Mammary epithelial cell (primary cell): ENCODE measurements at regions of chr6 and their contacts with region 1.

Region 1: GRCh38 chr6:53530346-53530745 is 14.6 kb downstream of the GCLC start:
- DNase-seq: peak; percentile 30
- H3K4me3 ChIP-seq: no peak overlapping the region
- H3K27ac ChIP-seq: no peak overlapping the region
- H3K4me1 ChIP-seq: peaks cover 28% of the 10 kb centered on the region
- H3K27me3 ChIP-seq: no peaks in the 10 kb centered on the region
- CTCF ChIP-seq: no peak

Region 2: DNA sequence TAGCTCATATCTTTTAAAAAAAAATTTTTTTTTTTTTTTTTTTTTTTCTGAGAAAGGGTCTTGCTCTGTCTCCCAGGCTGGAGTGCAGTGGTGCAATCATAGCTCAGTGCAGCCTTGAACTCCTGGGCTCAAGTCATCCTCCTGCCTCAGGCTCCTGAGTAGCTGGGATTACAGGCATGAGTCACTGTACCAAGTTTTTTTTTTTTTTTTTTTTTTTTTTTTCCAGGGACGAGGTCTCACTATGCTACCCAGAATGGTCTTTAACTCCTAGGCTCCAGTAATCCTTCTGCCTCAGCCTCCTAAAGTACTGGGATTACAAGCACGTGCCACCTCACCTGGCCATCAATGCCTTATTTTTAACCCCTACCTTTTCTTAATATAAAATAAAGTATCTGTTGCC is 13.3 kb before region 1 on chr6:
- CTCF ChIA-PET with region 1: interaction called, 26 read pairs
- dilution Hi-C with region 1: no loop called
- in situ Hi-C with region 1: no loop called
- intact Hi-C with region 1: no loop called
- DNase-seq: peak; percentile 44
- H3K4me3 ChIP-seq: no peak overlapping the region
- H3K27ac ChIP-seq: no peak overlapping the region
- H3K4me1 ChIP-seq: peaks cover 3% of the 10 kb centered on the region
- H3K27me3 ChIP-seq: no peaks in the 10 kb centered on the region
- CTCF ChIP-seq: no peak

Region 3: DNA sequence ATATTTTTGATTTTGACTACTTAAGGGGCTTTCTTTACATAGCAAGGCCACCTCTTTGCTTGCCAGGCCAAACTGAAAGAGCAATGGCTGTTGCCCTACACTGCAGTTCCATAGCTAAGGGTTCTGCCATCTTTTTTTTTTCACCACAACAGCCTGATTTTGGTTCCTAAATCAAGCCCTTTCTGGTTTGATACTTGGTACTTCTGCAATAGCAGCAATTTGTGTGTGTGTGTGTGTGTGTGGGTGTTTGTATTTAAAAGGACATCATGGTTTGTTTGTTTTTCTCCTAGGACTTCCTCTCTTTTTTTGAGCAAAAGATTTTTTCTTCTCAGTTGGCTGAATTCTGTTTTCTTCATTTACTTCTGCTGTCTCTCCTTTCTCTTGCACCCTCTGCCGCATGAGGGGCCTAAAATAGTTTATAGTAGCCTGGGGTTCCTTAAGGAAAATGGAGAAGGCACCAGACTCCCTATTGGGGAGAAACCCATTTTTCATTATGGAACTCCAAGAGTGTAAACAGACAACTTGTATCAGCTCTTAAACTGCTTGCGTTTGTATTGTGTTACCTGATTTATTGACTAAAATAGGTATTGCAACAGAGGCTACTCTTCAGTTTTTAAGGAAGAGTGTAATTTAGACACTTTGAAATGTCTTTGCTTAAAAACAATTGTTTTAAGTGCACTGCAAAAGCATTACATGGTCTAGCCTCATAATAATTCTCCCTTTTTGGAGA is 26.8 kb after region 1 on chr6:
- CTCF ChIA-PET with region 1: no interaction called
- dilution Hi-C with region 1: no loop called
- in situ Hi-C with region 1: no loop called
- intact Hi-C with region 1: no loop called
- DNase-seq: no peak
- H3K4me3 ChIP-seq: no peak overlapping the region
- H3K27ac ChIP-seq: no peak overlapping the region
- H3K4me1 ChIP-seq: no peaks in the 10 kb centered on the region
- H3K27me3 ChIP-seq: no peaks in the 10 kb centered on the region
- CTCF ChIP-seq: no peak